Brain microvascular endothelial cell (primary cell): ENCODE measurements at regions of chr14 and their contacts with region 1.

Region 1: GRCh38 chr14:33792720-33793368 is 158.0 kb downstream of the EGLN3 start:
- DNase-seq: peak; percentile 65
- H3K4me3 ChIP-seq: no peak overlapping the region
- H3K27ac ChIP-seq: no peak overlapping the region
- H3K27me3 ChIP-seq: no peaks in the 10 kb centered on the region
- CTCF ChIP-seq: peak; percentile 97

Region 2: GRCh38 chr14:32576088-32576795 is 1216.6 kb before region 1 on chr14:
- in situ Hi-C with region 1: loop called (anchors 25 kb)
- DNase-seq: peak; percentile 50
- H3K4me3 ChIP-seq: no peak overlapping the region
- H3K27ac ChIP-seq: no peak overlapping the region
- H3K27me3 ChIP-seq: no peaks in the 10 kb centered on the region
- CTCF ChIP-seq: peak; percentile 95

Region 3: DNA sequence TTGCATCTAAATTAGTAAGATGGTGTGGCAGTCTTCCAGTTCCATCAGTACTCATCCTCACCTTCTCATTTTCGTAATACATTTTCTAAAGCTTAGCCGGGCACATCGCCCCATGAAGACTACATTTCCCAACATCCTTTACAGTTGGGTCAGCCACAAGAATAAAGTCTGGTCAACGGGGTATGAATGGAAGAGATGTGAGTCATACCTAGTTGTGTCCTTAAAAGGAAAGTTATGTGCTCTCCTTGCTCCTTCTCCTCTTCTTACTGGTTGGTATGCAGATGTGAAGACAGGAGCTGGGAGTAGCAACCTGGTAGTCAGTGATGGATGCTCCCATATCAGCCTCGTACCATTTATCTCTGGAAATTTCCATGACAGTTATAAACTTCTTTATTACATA is 194.0 kb after region 1 on chr14:
- in situ Hi-C with region 1: no loop called
- DNase-seq: peak; percentile 82
- H3K4me3 ChIP-seq: no peak overlapping the region
- H3K27ac ChIP-seq: no peak overlapping the region
- H3K27me3 ChIP-seq: no peaks in the 10 kb centered on the region
- CTCF ChIP-seq: no peak

Region 4: GRCh38 chr14:34043627-34044372 is 251.0 kb after region 1 on chr14:
- in situ Hi-C with region 1: no loop called
- DNase-seq: no peak
- H3K4me3 ChIP-seq: no peak overlapping the region
- H3K27ac ChIP-seq: no peak overlapping the region
- H3K27me3 ChIP-seq: no peaks in the 10 kb centered on the region
- CTCF ChIP-seq: no peak

Region 5: DNA sequence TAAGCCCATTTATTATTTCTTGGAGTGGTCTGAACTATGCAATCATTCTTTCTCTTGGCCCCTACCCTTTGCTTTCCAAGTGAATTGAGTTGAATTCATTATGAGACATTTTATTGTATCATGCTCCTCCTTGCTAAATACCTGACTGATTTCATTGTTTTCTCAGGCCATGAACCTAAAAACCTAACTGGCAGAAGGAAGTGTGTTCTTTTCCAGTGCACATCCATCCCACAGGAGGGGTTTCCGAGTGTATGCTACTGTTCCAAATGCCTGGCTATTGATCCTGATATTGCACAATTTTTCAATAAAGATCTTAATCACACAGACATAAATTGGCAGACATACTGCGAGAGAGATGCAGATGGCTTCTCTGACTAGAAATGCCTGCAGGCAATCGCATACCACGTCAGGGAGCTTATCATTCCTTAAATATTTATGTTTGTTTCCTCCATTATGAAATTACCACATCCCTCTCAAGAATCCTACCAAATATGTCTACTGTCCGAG is 320.2 kb after region 1 on chr14:
- in situ Hi-C with region 1: no loop called
- DNase-seq: peak; percentile 9
- H3K4me3 ChIP-seq: no peak overlapping the region
- H3K27ac ChIP-seq: no peak overlapping the region
- H3K27me3 ChIP-seq: no peaks in the 10 kb centered on the region
- CTCF ChIP-seq: no peak